ENCODE measurements at regions of chr6 and their contacts with region 1.

Region 1: DNA sequence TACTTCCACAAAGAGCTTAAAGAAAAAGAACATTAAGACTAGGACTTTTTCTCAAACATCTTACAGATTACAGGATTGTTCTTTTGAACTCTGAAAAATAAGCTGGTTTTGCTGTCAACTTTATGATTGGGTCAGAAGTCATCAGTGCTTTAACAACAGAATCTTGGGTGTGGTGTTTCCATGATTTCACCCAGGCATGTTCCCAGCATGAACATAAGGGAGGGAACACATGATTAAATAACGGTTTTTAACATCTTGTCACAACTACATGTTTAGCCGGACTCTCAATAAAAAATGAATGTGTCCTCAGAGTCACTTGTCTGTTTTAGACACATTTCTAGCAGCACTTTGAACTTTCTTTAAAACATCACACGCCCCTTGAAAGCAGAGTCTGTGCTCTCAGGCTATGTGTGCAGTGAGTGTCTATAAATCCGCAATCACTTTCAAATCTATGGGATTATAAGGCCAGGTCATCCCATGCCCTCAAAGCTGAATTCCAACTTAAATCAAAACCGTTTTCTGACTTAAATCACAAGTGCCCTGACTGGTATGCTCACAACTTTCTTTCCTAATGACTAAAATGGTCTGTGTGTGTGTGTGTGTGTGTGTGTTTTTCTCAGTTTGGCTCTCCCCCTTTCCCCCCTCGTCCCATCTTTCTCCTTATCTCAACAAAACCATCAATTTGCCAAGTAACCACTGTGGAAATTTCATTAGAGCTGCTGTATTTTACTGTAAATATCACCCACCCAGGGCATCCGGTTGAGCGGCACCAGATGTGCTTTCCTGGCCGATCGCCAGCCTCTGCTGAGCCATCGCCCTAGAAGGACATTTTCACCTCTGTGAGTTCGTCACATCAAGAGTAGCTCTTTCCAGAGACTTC is 216.8 kb upstream of the DTNBP1 start:
- DNase-seq: no peak
- ATAC-seq: peak; percentile 81
- H3K4me3 ChIP-seq: no peak overlapping the region
- H3K27ac ChIP-seq: peak overlapping the region; percentile 61
- H3K4me1 ChIP-seq: peaks cover 18% of the 10 kb centered on the region
- H3K27me3 ChIP-seq: no peaks in the 10 kb centered on the region
- CTCF ChIP-seq: no peak
- EP300 ChIP-seq: 0 out of 4 replicates have a peak, but pooled peaks of 1 of the 2 experiments have one; percentile 25
- POLR2A ChIP-seq: no peak
- RAD21 ChIP-seq: no peak

Region 2: GRCh38 chr6:15312500-15312899 is 567.1 kb before region 1 on chr6:
- CTCF ChIA-PET with region 1: no interaction called
- POLR2A ChIA-PET with region 1: no interaction called
- RAD21 ChIA-PET with region 1: no interaction called
- SMC1A ChIA-PET with region 1: no interaction called
- in situ Hi-C with region 1: no loop called
- intact Hi-C with region 1: no loop called
- DNase-seq: no peak
- ATAC-seq: peak; percentile 41
- H3K4me3 ChIP-seq: peak overlapping the region; percentile 44; the same call in 1 of the 2 replicates
- H3K27ac ChIP-seq: peak overlapping the region; percentile 86
- H3K4me1 ChIP-seq: peaks cover 66% of the 10 kb centered on the region
- H3K27me3 ChIP-seq: no peaks in the 10 kb centered on the region
- CTCF ChIP-seq: no peak
- EP300 ChIP-seq: no peak
- POLR2A ChIP-seq: no peak
- RAD21 ChIP-seq: no peak

Region 3: GRCh38 chr6:15473741-15474161 is 405.9 kb before region 1 on chr6:
- CTCF ChIA-PET with region 1: no interaction called
- POLR2A ChIA-PET with region 1: no interaction called
- RAD21 ChIA-PET with region 1: no interaction called
- SMC1A ChIA-PET with region 1: no interaction called
- in situ Hi-C with region 1: no loop called
- intact Hi-C with region 1: no loop called
- DNase-seq: no peak
- ATAC-seq: no peak
- H3K4me3 ChIP-seq: no peak overlapping the region
- H3K27ac ChIP-seq: no peak overlapping the region
- H3K4me1 ChIP-seq: no peaks in the 10 kb centered on the region
- H3K27me3 ChIP-seq: no peaks in the 10 kb centered on the region
- CTCF ChIP-seq: no peak
- EP300 ChIP-seq: no peak
- POLR2A ChIP-seq: no peak
- RAD21 ChIP-seq: no peak

Region 4: GRCh38 chr6:15854826-15855710 is 24.6 kb before region 1 on chr6:
- CTCF ChIA-PET with region 1: interaction called, 5 read pairs
- POLR2A ChIA-PET with region 1: no interaction called
- RAD21 ChIA-PET with region 1: interaction called, 3 read pairs
- SMC1A ChIA-PET with region 1: interaction called, 11 read pairs
- in situ Hi-C with region 1: no loop called
- intact Hi-C with region 1: no loop called
- DNase-seq: no peak
- ATAC-seq: no peak
- H3K4me3 ChIP-seq: no peak overlapping the region
- H3K27ac ChIP-seq: no peak overlapping the region
- H3K4me1 ChIP-seq: no peaks in the 10 kb centered on the region
- H3K27me3 ChIP-seq: no peaks in the 10 kb centered on the region; a peak in 1 of 4 replicates
- CTCF ChIP-seq: no peak
- EP300 ChIP-seq: no peak
- POLR2A ChIP-seq: no peak
- RAD21 ChIP-seq: no peak

Region 5: GRCh38 chr6:15893556-15894268 is 14.1 kb after region 1 on chr6:
- CTCF ChIA-PET with region 1: interaction called, 15 read pairs
- POLR2A ChIA-PET with region 1: interaction called, 11 read pairs
- RAD21 ChIA-PET with region 1: interaction called, 134 read pairs
- SMC1A ChIA-PET with region 1: interaction called, 183 read pairs
- in situ Hi-C with region 1: no loop called
- intact Hi-C with region 1: no loop called
- DNase-seq: no peak
- ATAC-seq: 0 out of 3 replicates have a peak, but pooled peaks have one; percentile 22
- H3K4me3 ChIP-seq: no peak overlapping the region
- H3K27ac ChIP-seq: no peak overlapping the region
- H3K4me1 ChIP-seq: peaks cover 14% of the 10 kb centered on the region
- H3K27me3 ChIP-seq: no peaks in the 10 kb centered on the region
- CTCF ChIP-seq: peak in 2 of 3 experiments; percentile 37 to 59; a peak in 3 of 6 replicates
- EP300 ChIP-seq: no peak
- POLR2A ChIP-seq: no peak
- RAD21 ChIP-seq: peak; percentile 41

Measured in GM12878 (cell line).